Cardiac septum (tissue), 1 donor: ENCODE measurements at regions of chr13 and their contacts with region 1.

Region 1: DNA sequence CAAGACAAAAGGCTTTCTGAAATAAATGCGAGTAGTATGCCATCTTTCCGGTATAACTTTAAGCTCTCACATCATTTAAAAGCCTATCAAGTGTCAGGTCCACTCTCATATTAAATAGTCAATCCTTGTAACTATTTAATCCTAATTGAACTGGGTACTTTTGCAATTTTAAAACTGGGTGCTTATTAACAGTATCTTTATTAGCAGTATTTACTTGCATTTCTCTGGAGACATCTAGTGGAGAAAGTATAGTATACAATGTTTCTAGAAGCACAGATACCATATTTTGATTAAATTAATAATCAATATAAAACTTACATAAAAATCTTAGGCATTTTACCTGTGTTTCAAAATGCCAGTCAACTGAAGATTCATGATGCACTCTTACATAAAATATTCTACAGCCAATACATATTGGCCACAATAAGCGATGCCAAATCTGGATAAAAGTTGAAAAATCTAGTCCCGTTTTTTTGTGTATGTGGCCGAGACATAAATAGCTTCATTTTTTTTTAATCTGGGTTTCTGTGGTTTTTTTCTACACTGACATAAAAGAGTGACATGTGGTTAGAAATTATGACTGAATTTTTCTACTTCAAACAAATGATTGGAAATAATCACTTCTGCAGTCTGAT is 4.3 kb upstream of the POSTN start:
- DNase-seq: no peak

Region 2: DNA sequence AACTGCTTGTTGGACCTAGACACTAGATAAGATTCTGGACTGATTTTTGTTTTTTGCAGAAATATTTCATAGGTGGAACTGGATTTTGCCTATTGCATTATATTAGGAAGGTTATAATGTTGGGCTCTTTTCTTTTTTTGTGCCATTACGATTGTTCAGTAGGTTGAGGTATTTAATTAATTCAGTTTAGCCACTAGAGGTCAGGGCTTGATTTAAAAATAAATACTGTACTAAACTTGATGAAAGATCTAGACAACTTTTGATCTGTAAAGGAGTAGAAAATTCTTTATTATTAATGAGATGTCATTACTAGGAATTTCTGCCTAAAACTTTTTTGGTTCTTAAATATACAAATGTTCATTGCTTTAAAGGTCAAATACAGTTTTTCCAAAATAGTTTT is 528.2 kb before region 1 on chr13:
- intact Hi-C with region 1: loop called (anchors 5 kb)
- DNase-seq: no peak

Region 3: DNA sequence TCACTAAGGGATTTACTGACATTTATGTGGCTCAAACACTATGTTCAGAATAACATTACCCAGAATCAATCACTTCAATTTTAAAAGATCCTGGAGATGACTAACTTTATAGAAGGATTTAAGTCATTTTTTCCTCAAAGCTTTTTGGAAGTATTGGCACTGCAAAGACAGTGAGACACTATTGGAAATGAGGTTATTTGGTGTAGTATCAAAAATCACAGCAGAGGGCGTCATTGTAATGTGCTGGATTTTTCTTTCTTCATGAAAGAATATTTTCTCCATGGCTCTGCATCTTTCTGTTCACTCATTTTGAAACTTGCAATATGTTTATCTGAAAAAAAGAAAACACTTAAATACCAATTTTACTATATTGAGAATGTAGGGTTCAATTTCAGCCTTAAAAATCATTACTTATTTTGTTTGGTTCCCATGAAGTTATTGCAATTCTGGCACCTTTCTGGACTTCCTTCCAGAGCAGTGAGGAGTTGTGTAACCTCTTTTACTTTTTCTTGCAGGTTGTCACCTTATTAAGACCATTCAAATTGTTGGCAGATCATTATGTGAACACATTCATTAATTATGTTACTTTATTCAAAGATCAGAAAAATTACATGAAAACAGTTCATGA is 493.7 kb before region 1 on chr13:
- intact Hi-C with region 1: loop called (anchors 2 kb)
- DNase-seq: no peak